OCI-LY7 (cell line): ENCODE measurements at regions of chr4 and their contacts with region 1.

Region 1: DNA sequence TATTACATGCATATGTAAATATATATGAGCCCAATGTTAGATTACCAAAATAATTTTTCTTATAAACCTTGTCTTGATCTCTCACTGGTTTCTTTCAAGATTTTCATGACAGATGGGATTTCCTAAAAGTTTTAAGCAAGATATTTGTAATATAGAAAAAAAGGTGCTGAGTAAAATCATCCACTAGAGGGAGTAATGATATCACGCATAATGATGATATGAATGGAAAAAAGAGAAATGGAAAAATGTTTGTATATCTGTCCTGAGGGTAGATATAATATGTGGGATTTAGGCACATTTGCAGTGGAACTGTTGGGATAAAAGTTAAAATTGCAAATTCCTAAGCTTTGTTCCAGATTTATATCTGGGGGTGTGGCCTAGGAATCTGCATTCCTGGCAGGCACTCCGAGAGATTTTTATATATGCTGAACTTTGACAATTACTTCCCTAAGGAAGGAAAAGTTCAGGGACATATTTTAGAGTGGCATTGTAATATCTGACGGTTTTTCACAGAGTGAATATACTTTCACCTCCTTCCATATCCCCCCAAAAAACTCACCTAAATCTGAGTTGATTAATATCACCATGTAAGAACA is 60.5 kb downstream of the TMA16 start:
- DNase-seq: peak; percentile 68
- H3K4me3 ChIP-seq: no peak overlapping the region
- H3K27ac ChIP-seq: no peak overlapping the region
- H3K4me1 ChIP-seq: peaks cover 40% of the 10 kb centered on the region
- CTCF ChIP-seq: peak; percentile 99

Region 2: GRCh38 chr4:163587867-163588266 is 32.9 kb after region 1 on chr4:
- CTCF ChIA-PET with region 1: no interaction called
- POLR2A ChIA-PET with region 1: interaction called, 17 read pairs
- intact Hi-C with region 1: loop called (anchors 1 kb)
- DNase-seq: peak; percentile 87
- H3K4me3 ChIP-seq: peak overlapping the region; percentile 17
- H3K27ac ChIP-seq: peak overlapping the region; percentile 64
- H3K4me1 ChIP-seq: peaks cover 58% of the 10 kb centered on the region
- CTCF ChIP-seq: peak; percentile 92

Region 3: GRCh38 chr4:163673848-163674697 is 119.1 kb after region 1 on chr4:
- CTCF ChIA-PET with region 1: interaction called, 14 read pairs
- POLR2A ChIA-PET with region 1: interaction called, 111 read pairs
- intact Hi-C with region 1: no loop called
- DNase-seq: peak; percentile 67
- H3K4me3 ChIP-seq: peak overlapping the region; percentile 5
- H3K27ac ChIP-seq: peak overlapping the region; percentile 46
- H3K4me1 ChIP-seq: peaks cover 20% of the 10 kb centered on the region
- CTCF ChIP-seq: no peak

Region 4: DNA sequence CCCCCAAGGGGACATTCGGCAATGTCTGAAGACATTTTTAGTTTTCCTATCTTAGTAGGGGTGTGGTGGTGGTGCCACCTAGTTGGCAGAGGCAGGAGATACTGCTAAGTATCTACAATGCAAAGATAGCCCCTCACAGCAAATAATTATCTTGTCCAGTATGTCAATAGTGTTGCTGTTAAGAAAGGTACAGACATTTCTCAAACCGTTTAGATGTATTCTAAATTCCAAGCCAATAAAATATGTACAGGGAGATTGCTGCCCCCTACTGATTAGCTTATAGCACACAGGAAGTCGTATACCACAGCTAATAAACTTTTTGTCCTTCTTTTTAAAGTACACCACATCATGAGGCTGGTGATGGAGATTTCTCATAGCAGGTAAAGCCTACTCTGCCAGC is 200.0 kb after region 1 on chr4:
- CTCF ChIA-PET with region 1: interaction called, 11 read pairs
- POLR2A ChIA-PET with region 1: interaction called, 5 read pairs
- intact Hi-C with region 1: loop called (anchors 1 kb)
- DNase-seq: peak; percentile 55
- H3K4me3 ChIP-seq: no peak overlapping the region
- H3K27ac ChIP-seq: no peak overlapping the region
- H3K4me1 ChIP-seq: no peaks in the 10 kb centered on the region
- CTCF ChIP-seq: peak; percentile 89

Region 5: DNA sequence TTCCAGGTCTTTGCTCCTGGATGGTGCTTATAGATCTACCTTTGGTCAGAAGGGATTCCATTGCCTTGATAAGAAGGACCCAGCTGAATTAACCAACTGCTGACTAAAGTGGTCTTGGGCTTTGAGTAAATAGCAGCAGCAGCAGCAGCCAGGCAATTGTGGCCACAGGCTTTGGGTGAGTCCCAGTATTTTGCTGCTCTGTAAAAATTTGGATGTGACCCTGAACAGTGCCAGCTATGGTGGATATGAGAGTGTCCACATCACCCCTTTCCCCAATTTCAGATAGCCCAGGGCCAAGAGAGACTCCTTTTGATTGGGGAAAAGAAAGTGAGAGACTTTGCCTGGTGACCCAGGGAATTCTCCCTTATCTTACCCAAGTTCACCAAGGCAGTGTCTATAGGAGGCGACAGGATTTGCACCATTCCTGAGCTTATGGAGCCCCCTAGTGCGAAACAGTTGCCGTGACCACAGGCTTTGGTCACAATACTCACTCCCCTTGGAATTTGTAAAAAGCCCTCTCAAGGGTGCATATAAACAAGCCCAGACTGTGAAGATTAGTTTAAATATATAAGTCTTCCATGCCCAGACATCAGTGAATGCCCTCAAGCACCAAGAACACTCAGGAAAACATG is 457.5 kb after region 1 on chr4:
- CTCF ChIA-PET with region 1: no interaction called
- POLR2A ChIA-PET with region 1: no interaction called
- intact Hi-C with region 1: loop called (anchors 5 kb)
- DNase-seq: peak; percentile 10
- H3K4me3 ChIP-seq: no peak overlapping the region
- H3K27ac ChIP-seq: no peak overlapping the region
- H3K4me1 ChIP-seq: no peaks in the 10 kb centered on the region
- CTCF ChIP-seq: peak; percentile 64

Region 6: GRCh38 chr4:164731827-164732474 is 1177.0 kb after region 1 on chr4:
- CTCF ChIA-PET with region 1: no interaction called
- POLR2A ChIA-PET with region 1: no interaction called
- intact Hi-C with region 1: loop called (anchors 5 kb)
- DNase-seq: peak; percentile 51
- H3K4me3 ChIP-seq: no peak overlapping the region
- H3K27ac ChIP-seq: no peak overlapping the region
- H3K4me1 ChIP-seq: peaks cover 8% of the 10 kb centered on the region
- CTCF ChIP-seq: peak; percentile 97